Colonic mucosa (tissue), 4 donors: ENCODE measurements at regions of chr7 and their contacts with region 1.

Region 1: GRCh38 chr7:106659963-106660861 is 746 bp downstream of the CCDC71L start:
- DNase-seq: peak; percentile 81
- H3K4me3 ChIP-seq: peak overlapping the region; percentile 87
- H3K27ac ChIP-seq: peak overlapping the region; percentile 92
- H3K4me1 ChIP-seq: no peaks in the 10 kb centered on the region
- H3K27me3 ChIP-seq: no peaks in the 10 kb centered on the region
- CTCF ChIP-seq: peak; percentile 70

Region 2: DNA sequence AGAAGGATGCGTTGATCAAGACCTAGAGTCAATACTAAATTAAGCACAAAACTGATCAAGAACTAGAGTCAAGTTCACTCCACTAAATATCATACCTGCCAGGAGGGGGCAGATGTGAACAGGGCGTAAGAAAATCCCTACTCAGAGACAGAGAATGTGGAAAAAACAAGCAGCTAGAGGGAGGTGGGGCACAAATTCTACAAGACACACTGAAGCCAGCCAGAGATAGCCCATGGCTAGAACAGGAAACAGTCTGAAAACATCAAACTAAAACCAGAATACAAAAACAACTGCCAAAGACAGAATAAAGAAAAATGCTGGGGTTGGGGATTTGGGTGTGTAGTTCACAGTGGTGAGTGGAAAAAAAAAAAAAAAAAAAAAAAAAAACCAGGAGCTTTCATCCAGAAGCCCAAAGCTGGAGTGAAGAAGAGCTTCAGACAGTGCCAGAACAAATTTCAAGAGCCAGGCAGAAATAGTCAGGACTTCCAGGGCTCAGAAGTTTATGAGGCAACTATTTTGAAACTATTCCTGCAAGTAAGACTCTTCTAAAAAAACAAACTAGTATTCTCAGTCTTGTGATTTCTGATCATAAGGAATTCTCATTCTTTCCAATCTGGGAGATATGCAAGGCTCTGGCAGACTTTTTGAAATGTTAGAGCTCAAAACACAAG is 117.5 kb before region 1 on chr7:
- intact Hi-C with region 1: loop called (anchors 2 kb)
- DNase-seq: peak; percentile 75
- H3K4me3 ChIP-seq: no peak overlapping the region
- H3K27ac ChIP-seq: peak overlapping the region; percentile 29
- H3K4me1 ChIP-seq: no peaks in the 10 kb centered on the region
- H3K27me3 ChIP-seq: no peaks in the 10 kb centered on the region
- CTCF ChIP-seq: peak; percentile 38